GM23248 (cell line): ENCODE measurements at regions of chr1 and their contacts with region 1.

Region 1: DNA sequence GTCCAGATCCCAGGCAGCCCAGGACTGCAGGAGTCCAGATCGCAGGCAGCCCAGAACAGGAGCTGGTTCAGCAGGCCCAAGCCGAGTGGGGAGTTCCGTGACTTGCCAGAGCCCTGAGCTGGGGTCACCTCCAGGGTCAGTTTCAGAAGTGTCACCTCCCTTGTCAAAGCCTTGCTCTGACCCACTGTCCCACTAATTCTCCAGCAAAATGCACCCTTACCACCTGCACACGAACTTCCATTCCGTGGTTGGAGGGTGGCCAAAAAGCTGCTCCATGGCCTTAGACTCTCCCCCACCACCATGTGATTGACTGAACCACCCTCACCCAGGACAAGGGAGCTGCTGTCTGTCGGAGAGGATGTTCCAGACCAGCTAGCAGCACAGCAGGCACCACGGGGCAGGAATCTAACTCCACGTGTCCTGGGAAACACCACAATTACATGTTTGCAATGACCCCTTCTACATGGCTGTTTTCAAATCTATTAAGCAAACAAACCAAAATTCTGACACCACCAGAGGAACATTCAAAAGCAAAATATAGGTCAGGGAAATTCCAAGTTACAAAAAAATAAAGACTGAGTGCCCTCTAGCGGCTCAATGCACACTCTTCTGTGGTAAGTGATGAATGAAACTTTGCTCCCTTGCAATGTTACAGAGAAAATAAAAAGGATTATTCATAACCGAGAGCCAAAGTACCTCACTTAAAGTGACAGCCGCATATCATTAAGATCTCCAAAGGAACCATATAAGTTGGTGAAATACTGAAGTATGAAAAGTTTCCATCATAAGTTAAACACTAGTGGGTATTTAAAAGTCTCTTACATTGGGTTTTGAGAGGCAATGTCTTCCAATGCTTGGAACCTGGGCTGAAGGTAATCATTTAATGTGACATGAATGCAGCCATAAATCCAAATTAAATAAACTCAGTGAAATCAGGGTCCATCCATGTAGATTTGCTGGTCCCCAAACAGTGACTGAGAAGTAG is 76.3 kb downstream of the NPHP4 start:
- DNase-seq: peak; percentile 69
- H3K4me3 ChIP-seq: no peak overlapping the region
- H3K27ac ChIP-seq: no peak overlapping the region
- H3K4me1 ChIP-seq: peaks cover 4% of the 10 kb centered on the region; the same call in 1 of the 2 replicates
- H3K27me3 ChIP-seq: no peaks in the 10 kb centered on the region

Region 2: GRCh38 chr1:3900119-3900968 is 2015.5 kb before region 1 on chr1 and contains the start of gene C1orf174:
- in situ Hi-C with region 1: loop called (anchors 25 kb)
- DNase-seq: peak; percentile 99
- H3K4me3 ChIP-seq: peak within 1 kb of the TSS; percentile 90
- H3K27ac ChIP-seq: peak within 1 kb of the TSS; percentile 93
- H3K4me1 ChIP-seq: peaks cover 7% of the 10 kb centered on the region; the same call in 1 of the 2 replicates
- H3K27me3 ChIP-seq: no peaks in the 10 kb centered on the region
- total RNA-seq, gene C1orf174: 18.5 and 33.2 TPM in 2 replicates

Region 3: DNA sequence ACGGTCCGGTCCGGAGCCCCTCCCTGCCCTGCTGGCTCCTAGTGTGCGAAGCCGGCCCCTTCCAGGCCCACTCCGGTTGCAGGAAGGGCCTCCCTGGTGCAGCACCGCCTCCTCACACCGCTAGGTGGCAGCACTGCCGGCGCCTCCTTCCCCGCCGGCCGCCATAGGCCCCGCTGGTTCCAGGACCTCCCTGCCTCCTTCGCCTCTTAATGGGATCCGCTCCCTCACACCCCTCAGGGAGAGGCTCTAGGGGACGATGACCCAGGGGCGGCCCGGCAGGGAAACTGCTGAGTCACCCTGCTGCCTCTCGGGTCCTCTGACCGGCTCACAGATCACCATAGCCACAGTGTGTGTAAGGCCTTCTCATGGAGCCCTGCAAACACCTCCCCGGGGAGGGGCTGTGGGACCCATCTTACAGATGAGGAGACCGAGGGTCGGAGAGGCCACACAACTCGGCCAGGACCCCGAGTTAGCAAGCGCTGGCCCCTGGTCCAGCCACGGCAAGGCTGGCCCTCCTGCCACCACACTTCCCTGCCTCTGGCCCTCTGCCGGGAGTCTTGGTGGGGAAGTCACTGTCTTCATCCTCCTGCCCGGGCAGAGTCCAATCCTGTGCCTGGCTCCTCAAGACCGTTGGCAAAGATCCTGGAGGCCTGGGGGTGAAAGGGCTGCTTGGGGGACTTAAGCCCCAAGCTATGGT is 1263.1 kb before region 1 on chr1:
- in situ Hi-C with region 1: loop called (anchors 25 kb)
- DNase-seq: peak; percentile 55
- H3K4me3 ChIP-seq: no peak overlapping the region
- H3K27ac ChIP-seq: no peak overlapping the region
- H3K4me1 ChIP-seq: no peaks in the 10 kb centered on the region
- H3K27me3 ChIP-seq: peaks cover 11% of the 10 kb centered on the region

Region 4: GRCh38 chr1:5423109-5423508 is 492.8 kb before region 1 on chr1:
- in situ Hi-C with region 1: no loop called
- DNase-seq: no peak
- H3K4me3 ChIP-seq: no peak overlapping the region
- H3K27ac ChIP-seq: no peak overlapping the region
- H3K4me1 ChIP-seq: no peaks in the 10 kb centered on the region
- H3K27me3 ChIP-seq: no peaks in the 10 kb centered on the region

Region 5: GRCh38 chr1:5514519-5515183 is 401.2 kb before region 1 on chr1:
- in situ Hi-C with region 1: loop called (anchors 25 kb)
- DNase-seq: peak; percentile 48
- H3K4me3 ChIP-seq: no peak overlapping the region
- H3K27ac ChIP-seq: no peak overlapping the region
- H3K4me1 ChIP-seq: no peaks in the 10 kb centered on the region
- H3K27me3 ChIP-seq: no peaks in the 10 kb centered on the region

Region 6: GRCh38 chr1:5598824-5599395 is 317.0 kb before region 1 on chr1:
- in situ Hi-C with region 1: no loop called
- DNase-seq: no peak
- H3K4me3 ChIP-seq: no peak overlapping the region
- H3K27ac ChIP-seq: no peak overlapping the region
- H3K4me1 ChIP-seq: no peaks in the 10 kb centered on the region
- H3K27me3 ChIP-seq: no peaks in the 10 kb centered on the region

Region 7: GRCh38 chr1:6148497-6149241 is 232.8 kb after region 1 on chr1:
- in situ Hi-C with region 1: no loop called
- DNase-seq: peak; percentile 49
- H3K4me3 ChIP-seq: no peak overlapping the region
- H3K27ac ChIP-seq: no peak overlapping the region
- H3K4me1 ChIP-seq: no peaks in the 10 kb centered on the region
- H3K27me3 ChIP-seq: no peaks in the 10 kb centered on the region